ENCODE measurements at regions of chr19 and their contacts with region 1.

Region 1: DNA sequence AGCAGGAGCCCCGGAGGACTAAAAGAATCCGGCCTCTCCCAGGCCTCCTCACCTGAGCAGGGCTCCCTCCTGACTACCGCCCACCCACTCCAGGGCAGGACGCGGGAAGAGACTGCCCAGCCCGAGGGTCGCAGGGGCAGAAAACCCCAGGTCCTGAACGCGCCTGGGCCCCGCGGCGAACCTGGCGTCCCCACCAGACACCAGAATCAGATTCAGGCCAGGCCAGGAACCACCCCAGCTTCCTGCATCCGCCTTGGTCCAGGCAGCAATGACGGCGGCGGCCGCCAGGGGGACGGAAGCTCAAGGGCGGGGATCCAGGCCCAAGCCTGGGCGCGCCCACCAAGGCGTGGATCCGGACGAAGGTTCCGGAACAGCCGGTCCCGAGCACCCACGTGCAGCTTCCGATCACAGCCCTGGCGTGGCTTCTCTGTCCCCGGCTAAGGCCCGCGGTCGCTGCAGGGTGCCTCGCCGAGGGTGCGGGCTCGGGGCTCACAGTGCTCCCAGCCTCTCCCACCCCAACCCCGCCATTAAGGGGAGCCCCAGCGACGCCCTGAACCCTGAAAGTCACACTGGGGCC is 3.6 kb downstream of the LGALS7 start:
- DNase-seq: peak; percentile 19
- ATAC-seq: peak; percentile 79
- H3K4me3 ChIP-seq: no peak overlapping the region
- H3K27ac ChIP-seq: peak overlapping the region; percentile 52; the same call in 1 of the 2 replicates
- H3K4me1 ChIP-seq: peaks cover 0 to 6% of the 10 kb centered on the region in 2 experiments; a peak in 1 of 4 replicates
- H3K27me3 ChIP-seq: no peaks in the 10 kb centered on the region
- CTCF ChIP-seq: peak; percentile 38 to 67 (median 60); a peak in 5 of 6 replicates
- POLR2A ChIP-seq: no peak
- RAD21 ChIP-seq: peak; percentile 57

Region 2: DNA sequence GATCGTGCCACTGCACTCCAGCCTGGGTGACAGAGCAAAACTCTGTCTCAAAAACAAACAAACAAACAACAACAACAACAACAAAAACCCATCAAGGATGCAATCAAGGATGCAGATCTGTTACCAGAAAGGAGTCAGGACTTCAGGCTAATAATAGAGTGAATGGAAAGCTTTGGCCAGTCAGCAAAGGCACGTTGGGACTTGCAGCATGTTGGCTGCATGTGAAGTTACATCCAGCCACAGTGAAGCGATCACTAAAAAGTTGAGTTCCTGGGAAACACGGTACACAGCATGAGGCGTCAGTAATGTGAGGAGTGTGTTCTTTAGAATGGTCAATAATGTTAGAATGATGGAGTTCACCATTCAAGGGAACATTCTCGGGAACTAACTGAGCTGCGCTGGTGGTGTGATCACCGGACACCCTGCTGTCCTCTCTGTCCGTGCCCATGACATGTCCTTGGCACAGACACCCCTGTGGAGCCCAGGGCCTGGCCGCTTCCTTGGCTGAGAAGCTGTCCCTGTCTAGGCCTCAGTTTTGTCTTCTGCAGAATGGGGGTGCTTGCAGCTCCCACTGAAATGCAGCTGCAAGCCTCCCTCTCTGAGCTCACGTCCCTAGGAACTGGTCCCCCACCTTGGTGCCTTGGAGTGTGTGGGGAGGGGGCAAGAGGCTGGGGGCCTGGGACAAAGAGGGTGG is 17.0 kb after region 1 on chr19:
- CTCF ChIA-PET with region 1: interaction called, 10 read pairs
- POLR2A ChIA-PET with region 1: no interaction called
- RAD21 ChIA-PET with region 1: no interaction called
- intact Hi-C with region 1: no loop called
- DNase-seq: no peak
- ATAC-seq: no peak
- H3K4me3 ChIP-seq: no peak overlapping the region
- H3K27ac ChIP-seq: no peak overlapping the region
- H3K4me1 ChIP-seq: no peaks in the 10 kb centered on the region
- H3K27me3 ChIP-seq: no peaks in the 10 kb centered on the region
- CTCF ChIP-seq: no peak
- POLR2A ChIP-seq: no peak
- RAD21 ChIP-seq: no peak

Region 3: GRCh38 chr19:38862321-38863059 is 92.8 kb after region 1 on chr19:
- CTCF ChIA-PET with region 1: no interaction called
- POLR2A ChIA-PET with region 1: no interaction called
- RAD21 ChIA-PET with region 1: no interaction called
- intact Hi-C with region 1: no loop called
- DNase-seq: no peak
- ATAC-seq: no peak
- H3K4me3 ChIP-seq: no peak overlapping the region
- H3K27ac ChIP-seq: no peak overlapping the region
- H3K4me1 ChIP-seq: peaks cover 3 to 20% of the 10 kb centered on the region in 2 experiments; a peak in 3 of 4 replicates
- H3K27me3 ChIP-seq: no peaks in the 10 kb centered on the region
- CTCF ChIP-seq: no peak
- POLR2A ChIP-seq: no peak
- RAD21 ChIP-seq: no peak

Region 4: GRCh38 chr19:39166571-39167391 is 397.1 kb after region 1 on chr19:
- CTCF ChIA-PET with region 1: no interaction called
- POLR2A ChIA-PET with region 1: no interaction called
- RAD21 ChIA-PET with region 1: no interaction called
- intact Hi-C with region 1: no loop called
- DNase-seq: no peak
- ATAC-seq: peak; percentile 25
- H3K4me3 ChIP-seq: no peak overlapping the region
- H3K27ac ChIP-seq: 0 out of 2 replicates have a peak overlapping the region, but pooled peaks have one; percentile 29
- H3K4me1 ChIP-seq: peaks cover 16 to 22% of the 10 kb centered on the region in 2 experiments; a peak in 3 of 4 replicates
- H3K27me3 ChIP-seq: no peaks in the 10 kb centered on the region
- CTCF ChIP-seq: no peak
- POLR2A ChIP-seq: no peak
- RAD21 ChIP-seq: no peak

Measured in HCT116 (cell line).